Naive thymus-derived CD4-positive, alpha-beta T cell (primary cell): ENCODE measurements at regions of chr3 and their contacts with region 1.

Region 1: GRCh38 chr3:15205934-15206661 is at the start of gene CAPN7:
- DNase-seq: peak; percentile 90 to 98 (median 92)
- ATAC-seq: peak; percentile 96
- H3K4me3 ChIP-seq: peak within 1 kb of the TSS; percentile 91
- H3K4me3 Mint-ChIP-seq: peak within 1 kb of the TSS; percentile 85 to 96 (median 94)
- H3K27ac ChIP-seq: peak within 1 kb of the TSS; percentile 94
- H3K27ac Mint-ChIP-seq: peak within 1 kb of the TSS; percentile 87 to 96 (median 93)
- H3K4me1 ChIP-seq: peaks cover 11 to 15% of the 10 kb centered on the region in 2 donors
- H3K4me1 Mint-ChIP-seq: peaks cover 19 to 52% (median 36%) of the 10 kb centered on the region in 7 donors
- H3K27me3 ChIP-seq: no peaks in the 10 kb centered on the region
- H3K27me3 Mint-ChIP-seq: no peaks in the 10 kb centered on the region
- total RNA-seq, gene CAPN7: 34.4 to 104 (median 70.4) TPM

Region 2: GRCh38 chr3:15098503-15099363 is 107.4 kb before region 1 on chr3 and contains the start of gene RBSN:
- CTCF ChIA-PET with region 1: interaction called, 3 read pairs
- POLR2A ChIA-PET with region 1: interaction called, 15 read pairs
- intact Hi-C with region 1: loop called (anchors 1 kb)
- DNase-seq: peak; percentile 87 to 96 (median 94)
- ATAC-seq: peak; percentile 87
- H3K4me3 ChIP-seq: peak within 1 kb of the TSS; percentile 83
- H3K4me3 Mint-ChIP-seq: peak within 1 kb of the TSS; percentile 90 to 99 (median 96)
- H3K27ac ChIP-seq: peak within 1 kb of the TSS; percentile 96
- H3K27ac Mint-ChIP-seq: peak within 1 kb of the TSS; percentile 90 to 99 (median 98)
- H3K4me1 ChIP-seq: peaks cover 8 to 14% of the 10 kb centered on the region in 2 donors
- H3K4me1 Mint-ChIP-seq: peaks cover 21 to 42% (median 30%) of the 10 kb centered on the region in 7 donors
- H3K27me3 ChIP-seq: no peaks in the 10 kb centered on the region
- H3K27me3 Mint-ChIP-seq: peaks cover 0 to 9% (median 2%) of the 10 kb centered on the region in 5 donors
- total RNA-seq, gene RBSN: 20.5 to 54.4 (median 39.6) TPM

Region 3: DNA sequence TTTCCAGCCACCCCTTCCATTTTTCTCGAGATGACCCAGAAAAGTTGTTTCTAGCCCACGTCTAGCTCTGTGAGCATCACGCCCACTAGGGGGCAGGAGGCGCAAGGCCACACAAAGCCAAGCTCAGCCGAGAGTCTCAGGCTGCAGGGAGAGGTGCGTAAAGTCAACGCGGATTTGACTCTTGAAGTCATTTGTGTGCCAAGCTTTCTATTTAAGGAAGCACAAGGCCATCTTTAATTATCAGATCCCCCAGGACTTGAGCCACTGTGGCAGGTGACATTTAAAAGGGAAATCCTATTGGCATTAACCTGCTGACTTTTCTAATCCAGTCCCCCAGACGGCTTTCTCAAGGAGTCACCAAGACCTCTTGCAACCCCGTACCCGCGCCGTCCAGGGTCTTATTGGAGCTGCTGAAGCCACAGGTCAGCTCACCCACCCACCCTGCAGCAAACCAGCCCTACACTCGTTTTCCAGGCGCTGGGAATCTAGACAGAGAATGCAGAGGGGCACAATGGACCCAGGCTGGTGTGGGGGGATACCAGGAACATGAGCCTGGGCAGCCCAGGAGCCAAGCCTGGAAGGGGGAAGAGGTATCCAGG is 62.0 kb after region 1 on chr3:
- CTCF ChIA-PET with region 1: interaction called, 51 read pairs
- POLR2A ChIA-PET with region 1: interaction called, 16 read pairs
- intact Hi-C with region 1: loop called (anchors 1 to 2 kb)
- DNase-seq: peak; percentile 75 to 88 (median 82)
- ATAC-seq: peak; percentile 56
- H3K4me3 ChIP-seq: peak overlapping the region; percentile 4
- H3K4me3 Mint-ChIP-seq: peak overlapping the region in 9 of 10 donors; percentile 8 to 72 (median 56)
- H3K27ac ChIP-seq: no peak overlapping the region
- H3K27ac Mint-ChIP-seq: peak overlapping the region; percentile 32 to 84 (median 70)
- H3K4me1 ChIP-seq: peaks cover 54 to 69% of the 10 kb centered on the region in 2 donors
- H3K4me1 Mint-ChIP-seq: peaks cover 45 to 90% (median 73%) of the 10 kb centered on the region in 7 donors
- H3K27me3 ChIP-seq: no peaks in the 10 kb centered on the region
- H3K27me3 Mint-ChIP-seq: peaks cover 0 to 3% (median 0%) of the 10 kb centered on the region in 5 donors

Region 4: DNA sequence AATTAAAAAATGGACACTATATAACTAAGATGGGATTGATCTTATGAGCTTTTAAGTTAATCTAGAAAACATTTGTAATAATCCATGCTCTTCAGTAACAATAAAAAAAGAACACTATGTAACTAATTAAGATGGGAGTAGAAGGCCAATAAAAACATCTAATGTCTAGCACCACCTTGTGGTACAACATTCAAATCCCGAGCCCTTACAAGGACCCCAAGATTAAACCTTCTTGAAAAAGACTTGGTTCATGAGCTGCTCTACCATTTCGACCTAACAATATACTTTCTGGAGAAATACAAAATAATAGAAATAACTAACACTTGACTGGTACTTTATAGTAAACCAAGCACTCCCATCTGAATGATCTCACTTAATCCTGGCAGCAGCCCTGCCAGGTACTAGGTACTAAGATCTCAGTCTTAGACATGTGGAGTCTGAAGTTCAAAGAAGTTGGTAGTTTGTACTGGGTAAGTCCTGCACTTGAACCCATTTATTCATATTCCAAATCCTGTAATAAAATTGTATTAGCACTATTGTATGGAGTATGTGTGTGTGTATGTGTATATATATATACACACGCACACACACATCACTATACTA is 199.5 kb after region 1 on chr3:
- CTCF ChIA-PET with region 1: interaction called, 67 read pairs
- POLR2A ChIA-PET with region 1: interaction called, 7 read pairs
- intact Hi-C with region 1: loop called (anchors 1 kb)
- DNase-seq: peak in 7 of 9 donors; percentile 28 to 63 (median 49)
- ATAC-seq: peak; percentile 75
- H3K4me3 ChIP-seq: no peak overlapping the region
- H3K4me3 Mint-ChIP-seq: no peak overlapping the region
- H3K27ac ChIP-seq: no peak overlapping the region
- H3K27ac Mint-ChIP-seq: no peak overlapping the region
- H3K4me1 ChIP-seq: peaks cover 0 to under 1% of the 10 kb centered on the region in 2 donors
- H3K4me1 Mint-ChIP-seq: peaks cover 0 to 7% (median 1%) of the 10 kb centered on the region in 7 donors
- H3K27me3 ChIP-seq: no peaks in the 10 kb centered on the region
- H3K27me3 Mint-ChIP-seq: no peaks in the 10 kb centered on the region

Region 5: GRCh38 chr3:15815696-15816095 is 609.6 kb after region 1 on chr3:
- CTCF ChIA-PET with region 1: no interaction called
- POLR2A ChIA-PET with region 1: no interaction called
- intact Hi-C with region 1: loop called (anchors 1 kb)
- DNase-seq: peak in 6 of 9 donors; percentile 12 to 48 (median 28)
- ATAC-seq: peak; percentile 53
- H3K4me3 ChIP-seq: no peak overlapping the region
- H3K4me3 Mint-ChIP-seq: no peak overlapping the region
- H3K27ac ChIP-seq: no peak overlapping the region
- H3K27ac Mint-ChIP-seq: peak overlapping the region in 1 of 9 donors; percentile 59
- H3K4me1 ChIP-seq: peaks cover 0 to 8% of the 10 kb centered on the region in 2 donors
- H3K4me1 Mint-ChIP-seq: peaks cover 6 to 47% (median 43%) of the 10 kb centered on the region in 7 donors
- H3K27me3 ChIP-seq: no peaks in the 10 kb centered on the region
- H3K27me3 Mint-ChIP-seq: no peaks in the 10 kb centered on the region

Region 6: DNA sequence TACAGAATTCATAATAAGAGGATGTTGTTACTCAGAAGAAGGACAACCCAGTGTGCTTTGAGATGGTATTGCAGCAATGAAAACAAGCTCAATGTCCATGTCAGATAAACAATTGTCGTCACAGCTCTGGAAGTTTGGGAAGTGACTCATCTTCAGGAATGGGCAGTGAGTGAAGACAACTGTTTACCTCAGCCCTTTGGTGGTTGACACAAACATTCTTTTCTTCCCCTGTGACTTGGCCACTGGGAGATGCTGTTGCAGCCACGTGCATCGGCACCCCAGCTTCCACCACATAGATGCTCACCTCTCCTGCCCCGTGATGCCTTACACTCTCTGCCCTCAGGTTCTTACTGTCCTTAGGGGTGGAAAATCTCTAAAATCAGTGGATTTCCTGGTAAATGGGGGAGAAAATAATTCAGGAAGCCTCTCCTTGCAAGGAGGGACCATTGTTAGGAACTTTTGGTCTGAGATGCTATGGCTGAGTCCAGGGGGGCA is 854.3 kb after region 1 on chr3:
- CTCF ChIA-PET with region 1: no interaction called
- POLR2A ChIA-PET with region 1: no interaction called
- intact Hi-C with region 1: no loop called
- DNase-seq: no peak
- ATAC-seq: no peak
- H3K4me3 ChIP-seq: no peak overlapping the region
- H3K4me3 Mint-ChIP-seq: no peak overlapping the region
- H3K27ac ChIP-seq: no peak overlapping the region
- H3K27ac Mint-ChIP-seq: no peak overlapping the region
- H3K4me1 ChIP-seq: no peaks in the 10 kb centered on the region
- H3K4me1 Mint-ChIP-seq: peaks cover 0 to 3% (median 0%) of the 10 kb centered on the region in 7 donors
- H3K27me3 ChIP-seq: no peaks in the 10 kb centered on the region
- H3K27me3 Mint-ChIP-seq: peaks cover 6 to 12% (median 10%) of the 10 kb centered on the region in 5 donors

Region 7: GRCh38 chr3:16247276-16248061 is 1041.4 kb after region 1 on chr3:
- CTCF ChIA-PET with region 1: interaction called, 5 read pairs
- POLR2A ChIA-PET with region 1: interaction called, 4 read pairs
- intact Hi-C with region 1: loop called (anchors 1 kb)
- DNase-seq: peak; percentile 55 to 80 (median 72)
- ATAC-seq: peak; percentile 93
- H3K4me3 ChIP-seq: no peak overlapping the region
- H3K4me3 Mint-ChIP-seq: peak overlapping the region in 3 of 10 donors; percentile 4 to 37 (median 21)
- H3K27ac ChIP-seq: no peak overlapping the region
- H3K27ac Mint-ChIP-seq: peak overlapping the region in 2 of 9 donors; percentile 7 to 41
- H3K4me1 ChIP-seq: no peaks in the 10 kb centered on the region
- H3K4me1 Mint-ChIP-seq: peaks cover 0 to 32% (median 8%) of the 10 kb centered on the region in 7 donors
- H3K27me3 ChIP-seq: no peaks in the 10 kb centered on the region
- H3K27me3 Mint-ChIP-seq: no peaks in the 10 kb centered on the region